ENCODE measurements at regions of chr19 and their contacts with region 1.

Region 1: DNA sequence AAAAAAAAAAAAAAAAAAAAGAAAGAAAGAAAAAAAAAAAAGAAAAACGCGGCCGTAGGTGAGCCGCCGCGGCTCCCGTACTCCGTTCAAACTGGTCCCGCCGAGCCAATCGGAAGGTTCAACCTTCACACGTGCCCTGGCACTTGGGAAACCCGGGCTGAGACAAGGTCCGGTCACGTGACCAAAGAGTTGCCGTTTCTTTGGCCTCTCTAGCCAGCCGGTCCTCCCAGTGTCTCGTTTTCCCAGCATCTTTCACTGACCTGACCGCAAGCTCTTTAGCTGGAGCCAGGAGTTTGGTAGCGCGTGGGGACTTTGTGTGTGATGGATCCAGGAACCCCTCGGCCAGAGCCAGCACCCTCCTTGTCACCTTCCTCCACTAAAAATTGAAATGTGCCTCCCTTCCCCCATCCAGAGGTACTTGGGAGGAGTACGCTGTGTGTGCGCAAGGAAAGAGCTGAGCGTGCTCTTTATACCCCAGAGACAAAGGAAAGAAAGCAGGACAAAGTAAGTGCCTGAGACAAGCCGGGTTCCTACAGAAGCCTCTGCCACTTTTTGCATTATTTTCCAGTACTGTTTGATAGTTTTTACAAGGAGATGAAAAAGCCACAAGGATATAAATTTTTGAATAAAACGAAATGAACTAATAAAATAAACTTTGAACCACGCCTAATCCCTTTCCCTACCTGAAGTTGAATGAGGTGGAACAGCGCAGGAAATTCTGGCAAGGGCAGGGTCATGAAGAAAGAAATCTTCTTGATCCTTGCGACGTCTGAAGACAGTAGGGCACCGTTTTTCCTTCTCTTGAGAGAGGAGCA is 959 bp downstream of the TNPO2 start:
- DNase-seq: peak; percentile 97
- ATAC-seq: peak; percentile 84
- H3K4me3 Mint-ChIP-seq: peak overlapping the region; percentile 99
- H3K27ac Mint-ChIP-seq: peak overlapping the region; percentile 90
- H3K4me1 Mint-ChIP-seq: peaks cover 35% of the 10 kb centered on the region
- H3K27me3 Mint-ChIP-seq: no peaks in the 10 kb centered on the region

Region 2: GRCh38 chr19:12484371-12485051 is 238.3 kb before region 1 on chr19 and contains the start of gene ZNF709:
- CTCF ChIA-PET with region 1: no interaction called
- POLR2A ChIA-PET with region 1: no interaction called
- intact Hi-C with region 1: no loop called
- DNase-seq: peak; percentile 92
- ATAC-seq: peak; percentile 98
- H3K4me3 Mint-ChIP-seq: peak within 1 kb of the TSS; percentile 87
- H3K27ac Mint-ChIP-seq: peak within 1 kb of the TSS; percentile 58
- H3K4me1 Mint-ChIP-seq: peaks cover 27% of the 10 kb centered on the region
- H3K27me3 Mint-ChIP-seq: no peaks in the 10 kb centered on the region
- total RNA-seq, gene ZNF709: 1.7 to 2.1 TPM

Region 3: GRCh38 chr19:12696366-12697335 is 26.1 kb before region 1 on chr19 and contains the start of gene FBXW9:
- CTCF ChIA-PET with region 1: interaction called, 4 read pairs
- POLR2A ChIA-PET with region 1: interaction called, 3 read pairs
- intact Hi-C with region 1: loop called in 1 of 2 experiments (anchors 1 kb)
- DNase-seq: peak; percentile 98
- ATAC-seq: peak; percentile 91
- H3K4me3 Mint-ChIP-seq: peak within 1 kb of the TSS; percentile 75
- H3K27ac Mint-ChIP-seq: peak within 1 kb of the TSS; percentile 94
- H3K4me1 Mint-ChIP-seq: peaks cover 11% of the 10 kb centered on the region
- H3K27me3 Mint-ChIP-seq: no peaks in the 10 kb centered on the region
- total RNA-seq, gene FBXW9: 8.3 to 8.8 TPM

Region 4: GRCh38 chr19:12796146-12797071 is 73.6 kb after region 1 on chr19:
- CTCF ChIA-PET with region 1: interaction called, 11 read pairs
- POLR2A ChIA-PET with region 1: interaction called, 7 read pairs
- intact Hi-C with region 1: loop called in 1 of 2 experiments (anchors 1 kb)
- DNase-seq: peak; percentile 87
- ATAC-seq: peak; percentile 14
- H3K4me3 Mint-ChIP-seq: peak overlapping the region; percentile 63
- H3K27ac Mint-ChIP-seq: peak overlapping the region; percentile 84
- H3K4me1 Mint-ChIP-seq: peaks cover 35% of the 10 kb centered on the region
- H3K27me3 Mint-ChIP-seq: no peaks in the 10 kb centered on the region

Region 5: DNA sequence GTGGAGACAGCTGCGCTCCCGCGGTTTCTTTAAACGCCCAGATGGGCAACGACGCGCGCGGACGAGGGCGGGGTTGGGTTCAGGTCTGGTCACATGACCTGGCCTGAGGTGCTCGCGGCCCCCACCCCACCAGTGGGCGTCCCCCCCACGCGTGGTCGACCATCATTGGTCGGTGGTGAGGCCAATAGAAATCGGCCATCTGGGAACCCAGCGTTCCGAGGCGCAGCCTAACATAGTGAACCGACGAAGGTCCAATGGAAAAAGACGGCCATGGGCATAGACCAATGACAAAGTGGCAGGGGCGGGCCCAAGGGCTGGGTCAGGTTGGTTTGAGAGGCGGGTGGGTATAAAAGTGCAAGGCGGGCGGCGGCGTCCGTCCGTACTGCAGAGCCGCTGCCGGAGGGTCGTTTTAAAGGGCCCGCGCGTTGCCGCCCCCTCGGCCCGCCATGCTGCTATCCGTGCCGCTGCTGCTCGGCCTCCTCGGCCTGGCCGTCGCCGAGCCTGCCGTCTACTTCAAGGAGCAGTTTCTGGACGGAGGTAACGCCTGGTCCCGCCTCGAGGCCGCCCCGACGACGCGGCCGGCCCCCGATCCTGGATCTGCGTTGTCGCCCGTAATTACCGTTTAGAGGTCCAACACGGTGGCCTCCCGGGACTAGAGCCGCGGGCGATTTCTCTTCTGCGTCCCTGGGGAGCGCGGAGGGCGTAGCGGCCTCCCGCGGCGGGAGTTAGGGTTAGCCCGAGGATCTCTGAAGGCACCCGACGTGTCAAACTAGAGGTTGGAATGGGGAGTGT is 215.7 kb after region 1 on chr19 and contains the start of gene CALR:
- CTCF ChIA-PET with region 1: no interaction called
- POLR2A ChIA-PET with region 1: no interaction called
- intact Hi-C with region 1: loop called in 1 of 2 experiments (anchors 5 kb)
- DNase-seq: peak; percentile 99
- ATAC-seq: peak; percentile 89
- H3K4me3 Mint-ChIP-seq: peak within 1 kb of the TSS; percentile 99
- H3K27ac Mint-ChIP-seq: peak within 1 kb of the TSS; percentile 96
- H3K4me1 Mint-ChIP-seq: peaks cover 59% of the 10 kb centered on the region
- H3K27me3 Mint-ChIP-seq: no peaks in the 10 kb centered on the region
- total RNA-seq, gene CALR: 557 to 569 TPM

Measured in activated CD4-positive, alpha-beta T cell treated with anti-CD3 and anti-CD28 coated beads for 36 hours (primary cell).